Aorta (tissue), 5 donors: ENCODE measurements at regions of chr19 and their contacts with region 1.

Region 1: GRCh38 chr19:11798391-11799330 is at the start of gene ZNF491:
- DNase-seq: peak; percentile 96 to 97
- ATAC-seq: peak; percentile 99
- H3K4me3 ChIP-seq: peak within 1 kb of the TSS; percentile 8 to 55
- H3K27ac ChIP-seq: peak within 1 kb of the TSS in 1 of 2 donors; percentile 26
- H3K4me1 ChIP-seq: no peaks in the 10 kb centered on the region
- H3K27me3 ChIP-seq: no peaks in the 10 kb centered on the region
- total RNA-seq, gene ZNF491: 3.1 to 4.8 TPM

Region 2: GRCh38 chr19:11814029-11814699 is 15.5 kb after region 1 on chr19 and contains the start of gene ZNF440:
- intact Hi-C with region 1: loop called in 1 of 2 experiments (anchors 2 kb)
- DNase-seq: peak; percentile 97 to 98
- ATAC-seq: peak; percentile 100
- H3K4me3 ChIP-seq: peak within 1 kb of the TSS; percentile 46 to 88
- H3K27ac ChIP-seq: peak within 1 kb of the TSS; percentile 61 to 62
- H3K4me1 ChIP-seq: no peaks in the 10 kb centered on the region
- H3K27me3 ChIP-seq: no peaks in the 10 kb centered on the region
- total RNA-seq, gene ZNF440: 12.7 to 16.1 TPM

Region 3: GRCh38 chr19:11887611-11888531 is 89.2 kb after region 1 on chr19 and contains the start of gene ZNF69:
- intact Hi-C with region 1: loop called in 1 of 2 experiments (anchors 10 kb)
- DNase-seq: peak; percentile 91 to 95
- ATAC-seq: peak; percentile 95
- H3K4me3 ChIP-seq: peak within 1 kb of the TSS; percentile 31 to 45
- H3K27ac ChIP-seq: peak within 1 kb of the TSS in 1 of 2 donors; percentile 87
- H3K4me1 ChIP-seq: no peaks in the 10 kb centered on the region
- H3K27me3 ChIP-seq: no peaks in the 10 kb centered on the region
- total RNA-seq, gene ZNF69: 8.1 to 10.8 TPM

Region 4: GRCh38 chr19:11924886-11925650 is 126.4 kb after region 1 on chr19 and contains the start of gene ZNF700:
- intact Hi-C with region 1: loop called in 1 of 2 experiments (anchors 5 kb)
- DNase-seq: peak; percentile 95 to 97
- ATAC-seq: peak; percentile 98
- H3K4me3 ChIP-seq: peak within 1 kb of the TSS; percentile 42 to 79
- H3K27ac ChIP-seq: peak within 1 kb of the TSS in 1 of 2 donors; percentile 49
- H3K4me1 ChIP-seq: peaks cover 0 to 2% of the 10 kb centered on the region in 2 donors
- H3K27me3 ChIP-seq: no peaks in the 10 kb centered on the region
- total RNA-seq, gene ZNF700: 11.6 to 19.2 TPM

Region 5: GRCh38 chr19:11971041-11971440 is 172.4 kb after region 1 on chr19:
- intact Hi-C with region 1: no loop called
- DNase-seq: no peak
- ATAC-seq: no peak
- H3K4me3 ChIP-seq: no peak overlapping the region
- H3K27ac ChIP-seq: no peak overlapping the region
- H3K4me1 ChIP-seq: no peaks in the 10 kb centered on the region
- H3K27me3 ChIP-seq: no peaks in the 10 kb centered on the region

Region 6: GRCh38 chr19:11987405-11988281 is 189.0 kb after region 1 on chr19:
- intact Hi-C with region 1: loop called (anchors 2 to 5 kb)
- DNase-seq: peak; percentile 99
- ATAC-seq: peak; percentile 99
- H3K4me3 ChIP-seq: peak overlapping the region; percentile 55 to 83
- H3K27ac ChIP-seq: peak overlapping the region in 1 of 2 donors; percentile 46
- H3K4me1 ChIP-seq: no peaks in the 10 kb centered on the region
- H3K27me3 ChIP-seq: no peaks in the 10 kb centered on the region